Activated CD4-positive, alpha-beta memory T cell treated with anti-CD3 and anti-CD28 coated beads for 36 hours (primary cell): ENCODE measurements at regions of chr9 and their contacts with region 1.

Region 1: GRCh38 chr9:4117835-4118610 is 181.8 kb downstream of the GLIS3 start:
- DNase-seq: peak; percentile 65
- H3K4me3 Mint-ChIP-seq: no peak overlapping the region
- H3K27ac Mint-ChIP-seq: no peak overlapping the region
- H3K4me1 Mint-ChIP-seq: no peaks in the 10 kb centered on the region
- H3K27me3 Mint-ChIP-seq: no peaks in the 10 kb centered on the region

Region 2: GRCh38 chr9:3240656-3241268 is 877.3 kb before region 1 on chr9:
- CTCF ChIA-PET with region 1: no interaction called
- POLR2A ChIA-PET with region 1: no interaction called
- intact Hi-C with region 1: loop called (anchors 5 kb)
- DNase-seq: peak; percentile 78
- H3K4me3 Mint-ChIP-seq: no peak overlapping the region
- H3K27ac Mint-ChIP-seq: no peak overlapping the region
- H3K4me1 Mint-ChIP-seq: peaks cover 5% of the 10 kb centered on the region
- H3K27me3 Mint-ChIP-seq: no peaks in the 10 kb centered on the region

Region 3: GRCh38 chr9:3467593-3468219 is 650.3 kb before region 1 on chr9:
- CTCF ChIA-PET with region 1: no interaction called
- POLR2A ChIA-PET with region 1: no interaction called
- intact Hi-C with region 1: loop called (anchors 10 kb)
- DNase-seq: peak; percentile 70
- H3K4me3 Mint-ChIP-seq: no peak overlapping the region
- H3K27ac Mint-ChIP-seq: no peak overlapping the region
- H3K4me1 Mint-ChIP-seq: peaks cover 13% of the 10 kb centered on the region
- H3K27me3 Mint-ChIP-seq: no peaks in the 10 kb centered on the region

Region 4: DNA sequence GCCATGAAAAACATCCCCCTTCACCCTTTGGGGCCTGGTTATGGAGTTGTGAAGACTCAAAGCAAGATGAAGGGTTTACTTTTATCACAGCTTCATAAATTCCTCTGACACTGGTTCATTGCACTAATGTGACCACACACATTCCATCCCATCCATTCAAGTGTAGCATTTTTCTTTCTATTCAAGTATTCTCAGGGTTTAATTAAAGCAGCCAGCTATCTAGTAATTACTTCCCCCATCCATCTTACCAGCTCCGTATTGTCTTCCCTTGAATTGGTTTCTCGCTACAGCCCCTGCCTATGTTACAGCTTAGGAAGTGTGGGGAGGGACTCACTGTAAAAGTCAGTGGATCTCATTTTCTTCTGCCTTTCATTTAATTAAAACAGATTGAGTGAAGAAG is 205.2 kb before region 1 on chr9:
- CTCF ChIA-PET with region 1: no interaction called
- POLR2A ChIA-PET with region 1: no interaction called
- intact Hi-C with region 1: no loop called
- DNase-seq: no peak
- H3K4me3 Mint-ChIP-seq: no peak overlapping the region
- H3K27ac Mint-ChIP-seq: no peak overlapping the region
- H3K4me1 Mint-ChIP-seq: no peaks in the 10 kb centered on the region
- H3K27me3 Mint-ChIP-seq: peaks cover 1% of the 10 kb centered on the region

Region 5: DNA sequence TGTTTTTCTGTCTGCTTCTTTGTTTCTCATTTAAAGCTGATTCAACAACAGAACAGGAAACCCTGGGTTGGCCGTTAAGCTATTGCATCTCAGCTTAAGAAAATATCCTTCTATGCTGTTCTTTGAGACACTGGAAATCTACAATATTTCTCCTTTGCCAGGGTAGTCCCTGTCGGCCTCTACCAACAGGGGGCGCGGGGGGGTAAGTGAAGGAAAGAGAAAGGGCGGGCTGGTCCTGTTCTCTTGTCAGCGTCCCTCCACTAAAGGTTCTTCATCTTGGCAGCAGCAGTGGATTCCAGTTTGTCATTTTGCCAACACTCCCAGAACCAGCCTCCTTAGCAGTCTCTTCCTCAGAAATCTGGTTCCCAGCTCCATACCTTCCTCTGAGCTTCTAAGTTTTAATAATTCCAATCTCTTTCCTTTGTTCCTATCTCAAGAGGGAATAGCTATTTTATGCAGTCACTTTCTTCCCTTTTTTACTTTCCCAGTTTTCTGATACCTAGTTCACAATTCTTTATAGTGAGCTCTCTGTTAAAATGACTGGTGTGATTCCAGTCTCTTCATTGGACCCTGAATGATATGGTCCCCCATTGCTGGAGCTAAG is 40.4 kb before region 1 on chr9:
- CTCF ChIA-PET with region 1: interaction called, 3 read pairs
- POLR2A ChIA-PET with region 1: no interaction called
- intact Hi-C with region 1: loop called (anchors 1 kb)
- DNase-seq: peak; percentile 68
- H3K4me3 Mint-ChIP-seq: no peak overlapping the region
- H3K27ac Mint-ChIP-seq: no peak overlapping the region
- H3K4me1 Mint-ChIP-seq: no peaks in the 10 kb centered on the region
- H3K27me3 Mint-ChIP-seq: peaks cover 6% of the 10 kb centered on the region

Region 6: GRCh38 chr9:4106760-4107143 is 11.3 kb before region 1 on chr9:
- CTCF ChIA-PET with region 1: interaction called, 11 read pairs
- POLR2A ChIA-PET with region 1: no interaction called
- intact Hi-C with region 1: no loop called
- DNase-seq: no peak
- H3K4me3 Mint-ChIP-seq: no peak overlapping the region
- H3K27ac Mint-ChIP-seq: no peak overlapping the region
- H3K4me1 Mint-ChIP-seq: no peaks in the 10 kb centered on the region
- H3K27me3 Mint-ChIP-seq: peaks cover 2% of the 10 kb centered on the region

Region 7: DNA sequence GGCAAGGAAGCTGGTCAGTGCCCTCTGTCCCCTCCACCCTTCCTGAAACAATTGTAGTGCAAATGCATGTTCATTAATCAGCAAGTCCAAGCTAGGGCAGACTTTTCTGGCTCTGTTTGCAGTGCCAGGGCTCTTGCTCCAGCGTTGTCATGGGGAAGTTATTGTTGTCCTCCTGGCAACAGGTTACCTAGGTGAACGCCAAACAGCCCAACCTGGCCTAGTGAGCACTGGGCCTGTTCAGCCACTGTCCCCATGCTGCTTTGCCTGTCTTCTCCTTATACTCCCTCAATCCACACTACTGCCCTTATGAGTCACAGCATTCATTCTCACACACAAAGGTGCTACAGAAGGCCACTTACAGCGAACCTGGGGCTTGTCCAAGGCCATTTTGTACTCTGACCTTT is 216.4 kb after region 1 on chr9:
- CTCF ChIA-PET with region 1: no interaction called
- POLR2A ChIA-PET with region 1: no interaction called
- intact Hi-C with region 1: no loop called
- DNase-seq: no peak
- H3K4me3 Mint-ChIP-seq: no peak overlapping the region
- H3K27ac Mint-ChIP-seq: no peak overlapping the region
- H3K4me1 Mint-ChIP-seq: peaks cover 3% of the 10 kb centered on the region
- H3K27me3 Mint-ChIP-seq: no peaks in the 10 kb centered on the region